ENCODE measurements at regions of chr7 and their contacts with region 1.

Region 1: DNA sequence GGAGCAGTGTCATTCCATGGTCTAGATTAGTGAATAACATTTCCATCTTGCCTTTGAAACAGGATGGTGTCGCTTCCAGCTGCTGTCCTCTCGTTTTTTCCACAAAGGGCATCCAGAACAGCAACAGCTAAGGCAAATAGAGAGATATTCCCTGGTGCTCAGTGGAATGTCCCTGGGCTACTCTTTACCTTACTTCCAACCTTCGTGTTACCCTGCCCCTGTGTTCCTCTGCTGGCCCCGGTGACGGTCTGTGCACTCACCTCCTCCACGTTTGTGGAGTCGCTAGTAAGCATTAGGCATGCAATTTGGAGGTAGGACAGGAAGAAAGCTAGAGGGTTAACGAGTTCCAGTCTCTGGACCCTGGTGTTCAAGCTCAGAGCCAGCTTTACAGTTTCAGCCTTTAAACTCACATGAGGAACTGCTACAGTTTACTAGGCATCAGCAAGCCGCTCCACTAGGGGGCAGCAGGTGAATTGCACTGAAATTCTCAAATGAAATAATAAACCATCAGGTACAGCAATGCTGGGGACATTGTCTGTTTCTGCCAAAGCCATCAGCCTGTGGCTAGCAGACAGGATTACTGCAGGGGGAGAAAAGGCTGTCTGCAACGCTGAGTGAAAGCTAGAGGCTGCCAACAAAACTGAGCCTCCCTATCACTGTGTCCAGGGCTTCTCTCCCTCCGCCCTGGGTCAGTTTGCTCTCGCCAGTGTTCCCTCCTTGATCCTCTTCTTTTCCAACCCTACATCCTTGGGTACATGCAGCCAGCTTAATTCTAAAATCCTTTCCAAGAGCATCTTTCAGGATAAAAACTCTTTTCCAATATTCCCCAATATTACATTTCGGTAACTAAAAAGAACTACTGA is 9.0 kb downstream of the MRPL32 start:
- DNase-seq: peak; percentile 24
- H3K4me3 ChIP-seq: no peak overlapping the region
- CTCF ChIP-seq: peak; percentile 80

Region 2: GRCh38 chr7:42924223-42924838 is 16.9 kb before region 1 on chr7:
- CTCF ChIA-PET with region 1: interaction called, 51 read pairs
- POLR2A ChIA-PET with region 1: no interaction called
- DNase-seq: no peak
- H3K4me3 ChIP-seq: no peak overlapping the region
- CTCF ChIP-seq: no peak

Region 3: GRCh38 chr7:42972699-42973500 is 31.7 kb after region 1 on chr7:
- CTCF ChIA-PET with region 1: interaction called, 16 read pairs
- POLR2A ChIA-PET with region 1: interaction called, 3 read pairs
- DNase-seq: peak; percentile 96
- H3K4me3 ChIP-seq: no peak overlapping the region
- CTCF ChIP-seq: no peak

Region 4: GRCh38 chr7:43248961-43249822 is 308.0 kb after region 1 on chr7:
- CTCF ChIA-PET with region 1: interaction called, 22 read pairs
- POLR2A ChIA-PET with region 1: no interaction called
- DNase-seq: peak; percentile 28
- H3K4me3 ChIP-seq: no peak overlapping the region
- CTCF ChIP-seq: no peak

Region 5: GRCh38 chr7:43439631-43440401 is 498.6 kb after region 1 on chr7:
- CTCF ChIA-PET with region 1: interaction called, 12 read pairs
- POLR2A ChIA-PET with region 1: no interaction called
- DNase-seq: no peak
- H3K4me3 ChIP-seq: no peak overlapping the region
- CTCF ChIP-seq: peak; percentile 78

Measured in AG04449 (cell line).